ENCODE measurements at regions of chr22 and their contacts with region 1.

Region 1: GRCh38 chr22:24768537-24769374 is 5.8 kb downstream of the PIWIL3 start:
- DNase-seq: peak; percentile 35 to 68 (median 53)
- H3K4me3 ChIP-seq: no peak overlapping the region
- H3K27ac ChIP-seq: no peak overlapping the region
- H3K4me1 ChIP-seq: no peaks in the 10 kb centered on the region
- H3K27me3 ChIP-seq: no peaks in the 10 kb centered on the region
- CTCF ChIP-seq: peak in 2 of 3 donors; percentile 13 to 38
- EP300 ChIP-seq: no peak
- POLR2A ChIP-seq: no peak

Region 2: DNA sequence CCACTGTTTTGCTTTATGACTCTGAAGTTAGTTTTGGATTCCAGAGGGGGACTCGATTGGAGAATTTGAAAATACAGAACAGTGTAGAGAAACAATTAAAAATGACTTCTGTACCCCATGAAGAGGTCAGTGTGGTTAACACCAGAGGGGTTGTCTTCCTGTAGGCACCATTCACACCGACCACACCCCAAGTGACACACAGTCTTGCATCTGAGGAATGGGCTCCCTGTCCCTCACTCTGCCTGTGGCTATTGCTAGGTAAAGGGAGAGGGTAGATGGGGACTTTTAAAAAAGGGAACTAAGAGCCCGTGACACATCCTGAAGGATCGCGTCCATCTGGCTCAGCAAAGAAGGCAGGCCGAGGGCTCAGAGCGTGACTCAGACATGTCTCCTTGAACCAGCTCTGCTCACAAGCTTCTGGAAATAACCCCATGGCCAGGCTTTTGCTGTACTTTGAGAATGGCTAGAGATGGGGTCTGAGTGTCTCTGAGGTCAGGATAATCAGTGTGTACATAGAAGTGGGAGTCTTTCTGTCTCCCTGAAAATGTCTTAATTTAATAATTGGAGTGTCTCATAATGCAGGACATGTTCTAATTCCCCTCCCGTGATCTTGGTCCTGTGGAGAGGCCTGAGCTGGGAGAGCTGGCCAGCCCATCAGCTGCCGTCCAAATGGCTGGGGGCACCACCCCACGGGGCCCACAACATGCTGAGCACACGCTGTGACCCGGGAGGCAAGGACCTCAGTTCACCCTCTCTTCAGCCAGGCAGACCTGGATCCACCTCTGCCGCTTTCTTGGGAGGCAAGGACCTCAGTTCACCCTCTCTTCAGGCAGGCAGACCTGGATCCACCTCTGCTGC is 76.5 kb after region 1 on chr22:
- intact Hi-C with region 1: loop called in 2 of 4 experiments (anchors 2 to 10 kb)
- DNase-seq: peak in 2 of 5 donors; percentile 23 to 42
- H3K4me3 ChIP-seq: no peak overlapping the region
- H3K27ac ChIP-seq: no peak overlapping the region
- H3K4me1 ChIP-seq: no peaks in the 10 kb centered on the region
- H3K27me3 ChIP-seq: no peaks in the 10 kb centered on the region
- CTCF ChIP-seq: no peak
- EP300 ChIP-seq: no peak
- POLR2A ChIP-seq: no peak

Region 3: GRCh38 chr22:25057013-25057881 is 288.5 kb after region 1 on chr22:
- intact Hi-C with region 1: loop called in 1 of 4 experiments (anchors 10 kb)
- DNase-seq: peak; percentile 29 to 79 (median 74)
- H3K4me3 ChIP-seq: no peak overlapping the region
- H3K27ac ChIP-seq: no peak overlapping the region
- H3K4me1 ChIP-seq: no peaks in the 10 kb centered on the region
- H3K27me3 ChIP-seq: no peaks in the 10 kb centered on the region
- CTCF ChIP-seq: peak; percentile 61 to 80 (median 74)
- EP300 ChIP-seq: no peak
- POLR2A ChIP-seq: no peak

Measured in ovary (tissue), 10 donors.